Right ventricle myocardium inferior (tissue), 1 donor: ENCODE measurements at regions of chr21 and their contacts with region 1.

Region 1: GRCh38 chr21:39004634-39005501 is 178.4 kb downstream of the PSMG1 start:
- DNase-seq: peak; percentile 83
- ATAC-seq: peak; percentile 79

Region 2: GRCh38 chr21:39040494-39041110 is 35.7 kb after region 1 on chr21:
- intact Hi-C with region 1: loop called (anchors 5 kb)
- DNase-seq: no peak
- ATAC-seq: no peak

Region 3: DNA sequence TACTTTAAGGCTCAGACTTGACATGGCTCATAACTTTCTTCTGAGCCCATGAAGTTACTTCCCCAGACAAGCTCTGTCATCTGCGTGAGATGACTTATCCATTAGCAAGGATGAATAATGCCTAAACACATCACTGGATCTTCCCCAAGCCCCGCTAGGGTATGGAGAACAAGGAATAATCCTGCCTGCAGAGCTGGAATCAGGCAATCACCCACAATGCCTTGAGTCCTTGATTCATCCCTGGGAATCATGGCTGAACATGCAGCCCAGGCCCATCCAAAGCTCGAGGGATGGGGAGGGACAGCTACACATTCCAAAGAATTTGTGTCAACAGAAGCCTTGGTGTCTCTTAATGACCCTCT is 46.7 kb after region 1 on chr21:
- intact Hi-C with region 1: loop called (anchors 1 kb)
- DNase-seq: no peak
- ATAC-seq: no peak